Activated naive CD4-positive, alpha-beta T cell treated with anti-CD3 and anti-CD28 coated beads for 36 hours (primary cell): ENCODE measurements at regions of chr1 and their contacts with region 1.

Region 1: DNA sequence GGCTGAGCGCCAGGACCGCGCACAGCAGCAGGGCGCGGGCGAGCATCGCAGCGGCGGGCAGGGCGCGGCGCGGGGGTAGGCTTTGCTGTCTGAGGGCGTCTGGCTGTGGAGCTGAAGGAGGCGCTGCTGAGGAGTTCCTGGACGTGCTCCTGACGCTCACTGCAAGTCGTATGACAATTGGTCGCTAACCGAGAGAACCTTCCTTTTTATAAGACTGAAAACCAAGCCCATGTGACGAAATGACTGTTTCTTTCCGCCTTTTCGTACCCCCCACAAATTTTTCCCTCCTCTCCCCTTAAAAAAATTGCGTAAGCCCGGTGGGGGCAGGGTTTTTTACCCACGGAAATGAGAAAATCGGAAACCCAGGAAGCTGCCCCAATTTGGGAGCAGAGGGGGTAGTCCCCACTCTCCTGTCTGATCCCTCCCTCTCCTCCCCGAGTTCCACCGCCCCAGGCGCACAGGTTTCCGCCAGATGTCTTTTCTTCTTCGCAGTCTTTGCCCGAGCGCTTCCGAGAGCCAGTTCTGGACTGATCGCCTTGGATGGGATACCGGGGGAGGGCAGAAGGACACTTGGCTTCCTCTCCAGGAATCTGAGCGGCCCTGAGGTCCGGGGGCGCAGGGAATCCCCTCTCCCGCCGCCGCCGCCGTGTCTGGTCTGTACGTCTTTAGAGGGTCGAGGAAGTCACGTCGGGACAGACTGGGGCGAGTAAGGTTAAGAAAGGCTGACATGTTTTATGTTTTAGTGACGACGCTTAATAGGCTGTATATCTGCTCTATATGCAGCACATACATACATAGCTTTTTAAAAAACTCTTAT is at the start of gene PTGS2:
- DNase-seq: peak; percentile 65
- H3K4me3 Mint-ChIP-seq: peak within 1 kb of the TSS; percentile 78
- H3K27ac Mint-ChIP-seq: no peak within 1 kb of the TSS
- H3K4me1 Mint-ChIP-seq: peaks cover 10% of the 10 kb centered on the region
- H3K27me3 Mint-ChIP-seq: peaks cover 52% of the 10 kb centered on the region
- total RNA-seq, gene PTGS2: 1.8 to 2.0 TPM

Region 2: GRCh38 chr1:186404454-186405051 is 275.9 kb before region 1 on chr1:
- CTCF ChIA-PET with region 1: no interaction called
- intact Hi-C with region 1: loop called (anchors 1 kb)
- DNase-seq: no peak
- H3K4me3 Mint-ChIP-seq: no peak overlapping the region
- H3K27ac Mint-ChIP-seq: no peak overlapping the region
- H3K4me1 Mint-ChIP-seq: no peaks in the 10 kb centered on the region
- H3K27me3 Mint-ChIP-seq: no peaks in the 10 kb centered on the region